H1 (cell line): ENCODE measurements at regions of chr12 and their contacts with region 1.

Region 1: GRCh38 chr12:6927379-6928024 is at the start of gene ATN1:
- DNase-seq: peak in 1 of 2 experiments; percentile 83
- H3K4me3 ChIP-seq: peak within 1 kb of the TSS; percentile 90 to 99 (median 92)
- H3K27ac ChIP-seq: peak within 1 kb of the TSS; percentile 17; the same call in 1 of the 2 replicates
- H3K4me1 ChIP-seq: peaks cover 13 to 31% (median 17%) of the 10 kb centered on the region in 4 experiments
- H3K27me3 ChIP-seq: no peaks in the 10 kb centered on the region
- CTCF ChIP-seq: no peak
- EP300 ChIP-seq: peak in 1 of 2 experiments; percentile 62; a peak in 1 of 3 replicates
- POLR2A ChIP-seq: no peak
- RAD21 ChIP-seq: peak in 1 of 2 experiments; percentile 8; a peak in 1 of 4 replicates
- total RNA-seq, gene ATN1: 69.6 and 73.4 TPM in 2 replicates

Region 2: DNA sequence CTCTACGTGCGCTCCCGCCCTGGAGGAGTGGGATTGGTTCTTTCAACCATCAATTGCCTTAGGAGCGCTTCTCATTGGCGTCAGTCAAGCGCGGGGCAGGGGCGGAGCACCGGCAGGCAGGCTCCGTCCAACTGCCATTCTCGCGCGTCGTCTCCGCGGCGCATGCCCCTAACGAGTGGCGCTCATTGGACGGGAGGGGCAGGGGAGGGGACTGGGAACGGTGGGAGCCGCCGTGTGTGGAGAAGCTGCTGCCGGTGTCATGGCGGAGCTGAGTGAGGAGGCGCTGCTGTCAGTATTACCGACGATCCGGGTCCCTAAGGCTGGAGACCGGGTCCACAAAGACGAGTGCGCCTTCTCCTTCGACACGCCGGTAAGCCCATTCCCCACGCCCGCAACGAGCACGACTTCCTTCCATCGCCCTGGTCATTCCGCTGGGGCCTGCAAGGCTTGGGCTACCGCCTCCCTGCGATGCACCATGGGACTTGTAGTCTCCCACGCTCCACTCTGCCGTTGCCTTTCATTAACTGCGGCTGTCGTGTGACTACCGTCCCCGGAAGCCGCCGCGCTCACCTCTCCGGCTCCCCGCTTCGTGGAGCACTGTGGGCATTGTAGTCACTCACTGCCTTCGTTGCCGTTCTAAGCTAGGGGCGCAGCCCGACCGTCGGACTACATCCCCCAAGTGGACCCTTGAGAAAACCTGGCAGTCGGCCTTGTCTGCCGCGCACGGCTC is 75.4 kb before region 1 on chr12 and contains the start of gene USP5:
- CTCF ChIA-PET with region 1: interaction called, 5 read pairs
- POLR2A ChIA-PET with region 1: interaction called, 22 read pairs
- DNase-seq: peak; percentile 94 to 99
- H3K4me3 ChIP-seq: peak within 1 kb of the TSS; percentile 79 to 94 (median 88)
- H3K27ac ChIP-seq: peak within 1 kb of the TSS; percentile 77; the same call in 1 of the 2 replicates
- H3K4me1 ChIP-seq: peaks cover 0 to 14% (median 3%) of the 10 kb centered on the region in 4 experiments; a peak in 5 of 7 replicates
- H3K27me3 ChIP-seq: no peaks in the 10 kb centered on the region
- CTCF ChIP-seq: no peak
- EP300 ChIP-seq: no peak
- POLR2A ChIP-seq: peak in 1 of 2 experiments; percentile 79; a peak in 2 of 3 replicates
- RAD21 ChIP-seq: no peak
- total RNA-seq, gene USP5: 148 and 159 TPM in 2 replicates

Region 3: DNA sequence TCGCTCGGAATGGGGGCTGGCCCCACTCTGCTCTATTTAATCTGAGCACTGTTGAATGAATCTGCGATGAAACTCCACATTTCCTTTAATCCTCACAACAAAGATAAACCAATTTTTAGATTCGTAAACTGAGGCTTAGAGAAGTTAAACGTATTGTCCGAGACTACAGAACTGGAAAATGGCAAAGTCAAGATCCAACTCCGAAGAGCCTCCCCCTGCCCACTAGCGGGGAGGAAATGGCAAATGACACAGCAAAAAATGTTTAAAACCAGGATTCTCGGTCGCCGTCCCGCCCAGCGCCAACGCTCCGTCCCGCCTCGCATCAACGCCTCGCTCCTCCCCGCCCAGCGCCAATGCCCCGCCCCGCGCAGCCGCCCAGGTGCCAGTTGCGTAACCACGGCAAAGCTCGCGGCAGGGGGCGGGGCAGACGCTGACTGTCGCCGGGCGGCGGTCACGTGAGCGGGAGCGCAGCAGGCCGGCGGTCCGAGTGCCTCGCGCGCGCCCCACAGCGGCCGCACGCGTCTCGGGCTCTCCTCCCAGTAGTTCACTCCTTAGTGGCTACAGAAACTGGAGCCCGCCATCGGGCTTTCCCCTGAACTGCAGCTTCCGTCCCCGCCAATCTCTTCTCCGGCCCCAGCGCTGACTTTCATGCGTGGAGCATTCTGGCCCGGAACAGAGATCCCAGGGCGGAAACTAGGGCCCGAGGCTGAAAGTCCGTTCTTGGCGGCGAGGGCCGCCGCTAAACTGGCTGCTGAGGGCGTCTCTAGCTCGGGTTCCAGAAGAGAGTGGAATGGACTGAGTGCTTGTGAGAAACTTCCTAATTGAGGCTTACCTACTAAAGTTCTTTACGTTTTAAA is 36.5 kb before region 1 on chr12:
- CTCF ChIA-PET with region 1: interaction called, 5 read pairs
- POLR2A ChIA-PET with region 1: interaction called, 22 read pairs
- DNase-seq: peak; percentile 92 to 99
- H3K4me3 ChIP-seq: peak overlapping the region; percentile 31 to 63 (median 56)
- H3K27ac ChIP-seq: peak overlapping the region; percentile 76
- H3K4me1 ChIP-seq: peaks cover 0 to 9% (median 2%) of the 10 kb centered on the region in 4 experiments; a peak in 4 of 7 replicates
- H3K27me3 ChIP-seq: no peaks in the 10 kb centered on the region
- CTCF ChIP-seq: peak; percentile 72 to 96 (median 78)
- EP300 ChIP-seq: peak in 1 of 2 experiments; percentile 61; a peak in 1 of 3 replicates
- POLR2A ChIP-seq: peak; percentile 71 to 84
- RAD21 ChIP-seq: peak; percentile 42 to 61

Region 4: DNA sequence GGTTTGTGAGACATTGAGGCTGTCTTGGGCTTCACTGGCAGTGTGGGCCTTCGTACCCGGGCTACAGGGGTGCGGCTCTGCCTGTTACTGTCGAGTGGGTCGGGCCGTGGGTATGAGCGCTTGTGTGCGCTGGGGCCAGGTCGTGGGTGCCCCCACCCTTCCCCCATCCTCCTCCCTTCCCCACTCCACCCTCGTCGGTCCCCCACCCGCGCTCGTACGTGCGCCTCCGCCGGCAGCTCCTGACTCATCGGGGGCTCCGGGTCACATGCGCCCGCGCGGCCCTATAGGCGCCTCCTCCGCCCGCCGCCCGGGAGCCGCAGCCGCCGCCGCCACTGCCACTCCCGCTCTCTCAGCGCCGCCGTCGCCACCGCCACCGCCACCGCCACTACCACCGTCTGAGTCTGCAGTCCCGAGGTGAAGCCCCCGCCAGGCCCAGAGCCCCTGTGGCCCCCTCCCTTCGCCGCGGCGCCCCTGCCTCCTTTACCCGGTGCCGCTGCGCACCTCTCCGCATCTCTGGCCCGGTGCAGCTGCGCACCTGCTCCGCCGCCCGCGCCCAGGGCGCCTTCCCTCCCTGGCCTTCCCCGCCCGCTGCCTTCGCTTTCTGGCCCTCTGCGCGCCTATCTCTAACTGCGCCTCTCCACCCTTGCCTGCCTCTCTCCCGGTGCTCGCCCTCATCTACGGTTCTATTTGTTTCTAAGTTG is 13.1 kb before region 1 on chr12 and contains the start of gene ENO2:
- CTCF ChIA-PET with region 1: interaction called, 74 read pairs
- POLR2A ChIA-PET with region 1: interaction called, 1,027 read pairs
- DNase-seq: peak in 1 of 2 experiments; percentile 72
- H3K4me3 ChIP-seq: peak within 1 kb of the TSS; percentile 67 to 86 (median 78)
- H3K27ac ChIP-seq: 0 out of 2 replicates have a peak within 1 kb of the TSS, but pooled peaks have one; percentile 26
- H3K4me1 ChIP-seq: peaks cover 0 to 18% (median 9%) of the 10 kb centered on the region in 4 experiments; a peak in 6 of 7 replicates
- H3K27me3 ChIP-seq: no peaks in the 10 kb centered on the region
- CTCF ChIP-seq: no peak
- EP300 ChIP-seq: no peak
- POLR2A ChIP-seq: no peak
- RAD21 ChIP-seq: no peak
- total RNA-seq, gene ENO2: 90.9 and 92.4 TPM in 2 replicates

Region 5: GRCh38 chr12:6965026-6965661 is 37.6 kb after region 1 on chr12:
- CTCF ChIA-PET with region 1: interaction called, 58 read pairs
- POLR2A ChIA-PET with region 1: interaction called, 1,596 read pairs
- DNase-seq: peak in 1 of 2 experiments; percentile 88
- H3K4me3 ChIP-seq: peak overlapping the region in 2 of 4 experiments; percentile 23 to 79; a peak in 2 of 8 replicates
- H3K27ac ChIP-seq: peak overlapping the region; percentile 43; the same call in 1 of the 2 replicates
- H3K4me1 ChIP-seq: peaks cover 12 to 50% (median 32%) of the 10 kb centered on the region in 4 experiments
- H3K27me3 ChIP-seq: no peaks in the 10 kb centered on the region
- CTCF ChIP-seq: peak in 2 of 3 experiments; percentile 78 to 90; a peak in 3 of 4 replicates
- EP300 ChIP-seq: no peak
- POLR2A ChIP-seq: peak in 1 of 2 experiments; percentile 46; a peak in 2 of 3 replicates
- RAD21 ChIP-seq: peak; percentile 64 to 72